ENCODE measurements at regions of chr3 and their contacts with region 1.

Region 1: GRCh38 chr3:17258823-17259436 is 374.2 kb downstream of the PLCL2 start:
- DNase-seq: no peak
- H3K4me3 ChIP-seq: no peak overlapping the region
- H3K27ac ChIP-seq: no peak overlapping the region
- H3K4me1 ChIP-seq: no peaks in the 10 kb centered on the region
- H3K27me3 ChIP-seq: no peaks in the 10 kb centered on the region
- CTCF ChIP-seq: peak; percentile 31 to 75 (median 70)

Region 2: GRCh38 chr3:17179381-17180210 is 79.3 kb before region 1 on chr3:
- intact Hi-C with region 1: no loop called
- DNase-seq: no peak
- H3K4me3 ChIP-seq: no peak overlapping the region
- H3K27ac ChIP-seq: no peak overlapping the region
- H3K4me1 ChIP-seq: peaks cover 0 to 26% of the 10 kb centered on the region in 2 donors
- H3K27me3 ChIP-seq: no peaks in the 10 kb centered on the region
- CTCF ChIP-seq: no peak

Region 3: DNA sequence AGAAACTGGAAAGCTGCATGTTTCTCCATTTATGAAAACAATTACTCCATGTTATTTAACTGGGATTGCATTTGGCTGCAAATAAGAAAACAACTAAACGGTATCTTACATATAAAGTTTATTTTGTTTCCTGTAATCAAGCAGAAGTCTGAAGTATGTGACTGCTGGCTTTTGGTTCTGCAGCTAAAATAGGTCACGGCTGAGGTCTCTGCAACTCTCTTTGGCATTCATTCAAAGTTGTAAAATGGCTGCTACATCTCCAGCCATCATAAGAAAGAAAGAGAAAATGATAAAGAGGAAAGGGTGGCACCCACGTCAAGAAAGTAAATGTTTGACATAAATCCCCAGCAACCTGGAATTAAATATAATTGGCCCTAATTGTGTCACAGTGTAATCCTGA is 77.4 kb after region 1 on chr3:
- intact Hi-C with region 1: no loop called
- DNase-seq: no peak
- H3K4me3 ChIP-seq: no peak overlapping the region
- H3K27ac ChIP-seq: no peak overlapping the region
- H3K4me1 ChIP-seq: no peaks in the 10 kb centered on the region
- H3K27me3 ChIP-seq: no peaks in the 10 kb centered on the region
- CTCF ChIP-seq: no peak

Region 4: DNA sequence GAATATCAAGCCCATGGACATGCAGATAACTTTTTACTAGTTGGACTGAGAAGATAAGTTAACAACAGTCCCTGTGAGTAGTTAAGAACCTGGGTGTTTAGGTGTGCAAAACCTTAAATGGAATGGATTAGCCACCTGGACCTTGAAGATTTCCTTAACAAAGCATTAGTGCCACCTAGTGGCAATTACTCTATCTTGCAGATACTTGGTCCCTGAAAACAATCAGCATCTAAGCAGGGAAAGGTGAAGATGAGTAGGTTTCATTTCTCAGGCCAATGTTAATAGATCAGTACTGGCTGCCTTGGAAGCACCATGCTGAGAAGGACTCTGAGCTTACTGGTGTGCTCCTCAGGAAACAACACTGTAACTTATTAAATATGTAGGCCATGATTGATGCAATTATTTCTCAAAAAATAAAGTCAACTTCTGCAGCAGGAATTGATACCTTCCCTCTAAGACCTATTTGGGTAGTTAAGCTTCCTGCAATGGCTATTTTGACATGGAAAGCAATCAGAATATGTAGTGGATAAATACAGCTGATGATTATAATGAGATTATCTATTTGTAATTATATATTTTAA is 154.1 kb after region 1 on chr3:
- intact Hi-C with region 1: loop called (anchors 5 kb)
- DNase-seq: no peak
- H3K4me3 ChIP-seq: no peak overlapping the region
- H3K27ac ChIP-seq: no peak overlapping the region
- H3K4me1 ChIP-seq: no peaks in the 10 kb centered on the region
- H3K27me3 ChIP-seq: no peaks in the 10 kb centered on the region
- CTCF ChIP-seq: peak; percentile 46 to 74 (median 51)

Region 5: DNA sequence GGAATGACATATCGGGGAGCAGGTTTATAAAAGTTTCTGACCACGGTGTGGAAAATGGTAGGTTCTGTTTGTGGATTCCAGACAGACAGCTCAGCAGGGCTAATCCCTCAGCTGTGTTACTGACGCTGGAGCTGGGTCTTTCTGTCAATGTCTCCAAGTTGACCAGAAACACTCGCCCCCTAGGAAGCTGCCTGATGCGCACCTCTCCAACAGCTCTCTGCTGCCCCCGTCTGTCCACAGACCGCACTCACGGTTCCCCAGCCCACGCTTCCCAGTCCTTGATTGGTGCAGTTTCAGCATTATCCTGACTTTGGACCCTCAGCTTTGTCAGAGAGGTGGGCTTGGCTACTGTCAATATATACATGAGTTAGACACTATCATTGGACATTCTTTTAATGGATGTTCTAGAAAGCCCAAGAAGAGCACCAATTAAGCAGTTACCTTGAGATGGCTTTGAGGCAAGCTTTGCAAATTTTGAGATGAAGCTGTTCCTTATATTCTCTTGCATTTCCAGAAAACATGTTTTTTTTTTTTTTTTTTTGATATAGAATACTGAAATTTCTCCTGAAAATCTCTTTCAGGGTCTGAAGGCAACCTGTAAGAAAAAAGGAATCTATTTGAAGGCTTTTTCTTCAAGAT is 582.4 kb after region 1 on chr3:
- intact Hi-C with region 1: loop called (anchors 2 kb)
- DNase-seq: peak in 1 of 2 donors; percentile 78
- H3K4me3 ChIP-seq: no peak overlapping the region
- H3K27ac ChIP-seq: no peak overlapping the region
- H3K4me1 ChIP-seq: no peaks in the 10 kb centered on the region
- H3K27me3 ChIP-seq: no peaks in the 10 kb centered on the region
- CTCF ChIP-seq: peak; percentile 83 to 97 (median 92)

Measured in ascending aorta (tissue), 2 donors.